MCF 10A (cell line): ENCODE measurements at regions of chr11 and their contacts with region 1.

Region 1: GRCh38 chr11:223026-223789 is 12.9 kb downstream of the SIRT3 start:
- DNase-seq: no peak
- H3K4me3 Mint-ChIP-seq: no peak overlapping the region
- H3K27ac Mint-ChIP-seq: peak overlapping the region; percentile 38
- H3K4me1 Mint-ChIP-seq: peaks cover 9% of the 10 kb centered on the region
- H3K27me3 Mint-ChIP-seq: no peaks in the 10 kb centered on the region
- CTCF ChIP-seq: no peak

Region 2: DNA sequence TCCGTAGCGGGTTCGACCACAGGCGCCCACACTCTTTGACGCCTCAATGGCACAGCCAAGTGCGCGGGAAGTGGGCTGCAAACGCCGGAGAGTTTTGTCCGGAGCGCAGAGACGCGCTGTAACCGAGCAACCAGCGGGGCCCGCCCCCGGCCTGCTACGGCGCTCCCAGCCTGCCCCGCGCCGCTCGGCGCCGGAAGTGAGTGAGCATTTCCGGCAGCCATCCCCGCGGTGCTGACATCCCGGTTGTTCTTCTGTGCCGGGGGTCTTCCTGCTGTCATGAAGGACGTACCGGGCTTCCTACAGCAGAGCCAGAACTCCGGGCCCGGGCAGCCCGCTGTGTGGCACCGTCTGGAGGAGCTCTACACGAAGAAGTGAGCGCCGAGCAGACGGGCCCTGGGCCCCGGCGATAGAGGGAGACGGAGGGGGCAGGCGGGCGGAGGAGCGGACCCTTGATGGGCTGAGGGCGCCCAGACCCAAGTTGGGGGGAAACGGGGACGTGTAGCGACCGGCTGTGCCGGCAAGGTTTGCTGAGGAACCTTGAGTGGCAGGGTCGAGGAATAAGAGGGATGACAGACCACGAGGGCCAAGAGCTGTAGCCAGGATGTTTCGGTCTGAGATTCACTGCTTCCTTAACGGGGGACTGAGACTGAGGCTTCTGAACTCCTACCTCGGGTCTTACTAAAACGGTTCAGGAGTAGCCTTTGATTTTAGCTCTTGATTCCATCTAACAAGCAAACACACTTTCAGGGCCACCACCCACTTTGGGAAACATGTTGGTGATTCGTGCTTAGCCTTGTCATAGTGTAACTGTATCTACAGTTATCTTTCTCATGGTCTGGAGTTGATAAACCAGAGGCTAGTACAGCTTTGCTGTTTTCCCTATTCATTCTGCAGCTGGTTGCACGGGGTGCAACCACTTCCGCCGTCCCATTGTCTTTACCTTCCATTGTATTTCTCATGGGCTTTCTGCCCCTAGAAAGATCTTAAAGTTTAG is 13.9 kb after region 1 on chr11 and contains the start of gene PSMD13:
- CTCF ChIA-PET with region 1: no interaction called
- POLR2A ChIA-PET with region 1: interaction called, 13 read pairs
- intact Hi-C with region 1: no loop called
- DNase-seq: peak; percentile 76
- H3K4me3 Mint-ChIP-seq: peak within 1 kb of the TSS; percentile 79
- H3K27ac Mint-ChIP-seq: peak within 1 kb of the TSS; percentile 96
- H3K4me1 Mint-ChIP-seq: peaks cover 24% of the 10 kb centered on the region
- H3K27me3 Mint-ChIP-seq: no peaks in the 10 kb centered on the region
- CTCF ChIP-seq: no peak
- total RNA-seq, gene PSMD13: 86.8 and 103 TPM in 2 replicates